Activated T-helper 1 cell treated with anti-CD3 and anti-CD28 coated beads, Interleukin-12 subunit alpha, Interleukin-12 subunit beta, Interleukin-2, Interleukin-4 antibody, amounts not matched to agents 30 ng/mL and 10 ng/mL and 1 ng/mL, durations not matched to agents 14 hours and 24 hours and 36 hours (primary cell): ENCODE measurements at regions of chr14 and their contacts with region 1.

Region 1: DNA sequence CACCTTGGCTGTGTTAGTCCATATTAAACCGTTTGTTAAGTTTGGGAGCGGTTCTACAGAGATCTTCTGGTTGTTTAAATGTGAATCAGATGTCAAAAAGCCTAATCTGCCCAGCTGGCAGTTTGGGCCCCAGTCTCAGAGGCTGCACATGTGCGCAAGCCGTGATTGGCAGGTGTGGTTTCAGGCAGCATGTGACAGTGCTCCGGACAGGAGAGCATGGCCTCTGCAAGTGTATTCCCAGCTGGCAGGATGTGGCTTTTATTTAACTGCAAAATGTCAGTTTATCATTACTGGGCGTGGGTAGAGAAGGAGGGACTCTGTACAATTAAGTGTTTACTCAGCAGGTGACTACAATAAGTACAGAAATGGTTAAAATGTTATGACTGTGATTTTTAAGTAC is 77.5 kb downstream of the PELI2 start:
- DNase-seq: no peak
- H3K4me3 Mint-ChIP-seq: peak overlapping the region; percentile 68
- H3K27ac Mint-ChIP-seq: peak overlapping the region; percentile 83
- H3K4me1 Mint-ChIP-seq: peaks cover 22% of the 10 kb centered on the region
- H3K27me3 Mint-ChIP-seq: no peaks in the 10 kb centered on the region

Region 2: DNA sequence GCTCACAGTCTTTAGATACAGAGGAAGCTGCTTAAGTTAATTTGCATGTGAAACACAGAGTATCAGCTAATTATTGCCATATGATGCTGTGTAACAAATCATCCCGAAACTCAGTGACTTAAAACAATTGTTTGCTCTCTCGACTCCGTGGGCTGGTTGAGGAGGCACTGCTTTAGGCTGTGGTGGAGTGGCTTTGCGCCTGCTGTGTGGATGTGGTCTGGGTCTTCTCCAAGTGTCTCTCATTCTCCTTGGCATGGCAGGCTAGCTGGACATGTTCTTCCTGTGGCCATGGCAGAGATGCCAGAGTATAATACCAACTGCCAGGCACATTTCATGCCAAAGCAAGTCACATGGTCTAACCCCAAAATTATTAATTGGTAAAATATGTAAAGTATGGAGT is 36.6 kb before region 1 on chr14:
- intact Hi-C with region 1: loop called (anchors 5 kb)
- DNase-seq: no peak
- H3K4me3 Mint-ChIP-seq: no peak overlapping the region
- H3K27ac Mint-ChIP-seq: no peak overlapping the region
- H3K4me1 Mint-ChIP-seq: peaks cover 16% of the 10 kb centered on the region
- H3K27me3 Mint-ChIP-seq: peaks cover 1% of the 10 kb centered on the region

Region 3: GRCh38 chr14:56374421-56374820 is 178.7 kb after region 1 on chr14:
- intact Hi-C with region 1: no loop called
- DNase-seq: no peak
- H3K4me3 Mint-ChIP-seq: no peak overlapping the region
- H3K27ac Mint-ChIP-seq: no peak overlapping the region
- H3K4me1 Mint-ChIP-seq: no peaks in the 10 kb centered on the region
- H3K27me3 Mint-ChIP-seq: peaks cover 10% of the 10 kb centered on the region